Panc1 (cell line): ENCODE measurements at regions of chr7 and their contacts with region 1.

Region 1: DNA sequence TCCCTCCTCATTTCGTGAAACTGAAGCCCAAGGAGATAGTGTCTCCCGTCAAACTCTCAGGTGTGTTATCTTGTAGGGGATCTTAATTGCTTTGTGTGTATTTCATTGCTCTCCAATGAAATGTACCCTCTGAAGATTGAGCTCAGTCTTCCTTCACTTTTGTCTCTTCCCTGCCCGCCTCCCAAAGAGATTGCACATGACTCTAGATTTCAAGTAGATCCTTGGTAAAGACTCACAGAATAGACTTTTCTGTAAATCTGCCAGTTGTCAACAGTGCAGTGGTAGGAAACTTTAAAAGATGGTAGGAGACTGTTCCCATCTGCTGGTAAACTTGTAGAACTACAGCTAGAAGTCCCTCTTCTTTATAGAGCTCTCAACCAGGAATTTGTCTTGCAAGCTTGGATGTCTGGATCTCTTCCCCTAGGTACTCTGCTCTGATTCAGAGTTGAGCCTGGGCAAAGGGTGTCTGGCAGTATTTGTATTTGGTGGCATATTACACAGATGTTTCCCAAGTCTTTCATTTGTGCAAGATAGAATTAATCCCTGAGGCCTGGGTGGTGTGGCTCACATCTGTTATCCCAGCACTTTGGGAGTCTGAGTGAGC is 9.6 kb downstream of the CCL26 start:
- DNase-seq: peak; percentile 62
- ATAC-seq: peak; percentile 97
- H3K4me3 ChIP-seq: no peak overlapping the region
- H3K27ac ChIP-seq: no peak overlapping the region
- H3K4me1 ChIP-seq: no peaks in the 10 kb centered on the region
- H3K27me3 ChIP-seq: no peaks in the 10 kb centered on the region
- CTCF ChIP-seq: peak; percentile 83

Region 2: GRCh38 chr7:75642810-75643486 is 119.5 kb before region 1 on chr7:
- CTCF ChIA-PET with region 1: no interaction called
- POLR2A ChIA-PET with region 1: no interaction called
- in situ Hi-C with region 1: no loop called
- intact Hi-C with region 1: loop called (anchors 10 kb)
- DNase-seq: peak; percentile 67
- ATAC-seq: peak; percentile 68
- H3K4me3 ChIP-seq: no peak overlapping the region
- H3K27ac ChIP-seq: no peak overlapping the region
- H3K4me1 ChIP-seq: peaks cover 10% of the 10 kb centered on the region
- H3K27me3 ChIP-seq: no peaks in the 10 kb centered on the region
- CTCF ChIP-seq: peak; percentile 93

Region 3: GRCh38 chr7:75716992-75717626 is 45.3 kb before region 1 on chr7:
- CTCF ChIA-PET with region 1: no interaction called
- POLR2A ChIA-PET with region 1: no interaction called
- in situ Hi-C with region 1: no loop called
- intact Hi-C with region 1: no loop called
- DNase-seq: peak; percentile 83
- ATAC-seq: peak; percentile 58; the same call in 1 of the 2 replicates
- H3K4me3 ChIP-seq: no peak overlapping the region
- H3K27ac ChIP-seq: no peak overlapping the region
- H3K4me1 ChIP-seq: peaks cover 4% of the 10 kb centered on the region; the same call in 1 of the 2 replicates
- H3K27me3 ChIP-seq: no peaks in the 10 kb centered on the region
- CTCF ChIP-seq: no peak

Region 4: DNA sequence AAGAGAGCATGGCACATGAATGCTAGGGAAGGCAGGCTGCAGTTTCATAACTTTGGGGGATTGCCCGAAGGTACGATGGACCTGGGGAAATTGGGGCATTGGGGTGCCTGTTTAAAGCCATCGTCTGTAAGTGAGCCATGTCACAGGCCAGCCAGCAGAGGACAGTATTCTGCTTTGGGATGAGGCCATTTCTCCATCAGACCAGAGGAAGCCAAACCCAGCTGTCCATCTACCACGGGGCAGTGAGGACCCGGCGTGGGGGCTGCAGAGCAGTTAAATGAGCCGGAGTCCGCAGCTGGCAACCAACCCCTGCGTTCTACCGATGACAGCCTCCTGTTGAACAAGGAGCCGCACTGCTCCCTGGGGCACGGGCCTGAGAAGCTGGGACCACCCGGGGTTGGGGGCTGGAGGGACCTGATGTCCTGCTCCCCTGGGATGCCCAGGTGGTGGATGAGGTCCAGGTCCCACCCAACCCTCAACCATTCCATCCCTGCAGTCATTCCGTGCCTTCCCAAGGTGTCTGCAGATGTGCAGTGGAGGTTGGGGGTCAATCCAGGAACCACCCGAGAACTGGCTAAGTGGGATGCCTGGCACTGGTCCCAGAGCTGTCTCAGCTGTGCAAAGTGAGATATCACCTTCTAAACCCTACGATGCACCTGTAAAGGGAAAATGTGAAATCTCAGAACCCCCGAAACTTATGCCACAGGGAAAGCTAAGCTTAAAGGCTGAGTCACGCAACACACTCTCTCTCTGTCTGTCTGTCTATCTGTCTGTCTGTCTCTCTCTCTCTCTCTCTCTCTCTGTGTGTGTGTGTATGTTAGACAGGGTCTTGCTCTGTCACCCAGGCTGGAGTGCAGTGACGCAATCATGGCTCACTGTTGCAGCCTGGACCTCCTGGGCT is 104.3 kb after region 1 on chr7:
- CTCF ChIA-PET with region 1: no interaction called
- POLR2A ChIA-PET with region 1: no interaction called
- in situ Hi-C with region 1: no loop called
- intact Hi-C with region 1: no loop called
- DNase-seq: peak; percentile 75
- ATAC-seq: peak; percentile 93
- H3K4me3 ChIP-seq: peak overlapping the region in 1 of 2 experiments; percentile 8; a peak in 1 of 4 replicates
- H3K27ac ChIP-seq: no peak overlapping the region
- H3K4me1 ChIP-seq: 0 out of 2 replicates have a peak, but pooled peaks cover 3% of the 10 kb centered on the region
- H3K27me3 ChIP-seq: no peaks in the 10 kb centered on the region
- CTCF ChIP-seq: peak; percentile 98

Region 5: DNA sequence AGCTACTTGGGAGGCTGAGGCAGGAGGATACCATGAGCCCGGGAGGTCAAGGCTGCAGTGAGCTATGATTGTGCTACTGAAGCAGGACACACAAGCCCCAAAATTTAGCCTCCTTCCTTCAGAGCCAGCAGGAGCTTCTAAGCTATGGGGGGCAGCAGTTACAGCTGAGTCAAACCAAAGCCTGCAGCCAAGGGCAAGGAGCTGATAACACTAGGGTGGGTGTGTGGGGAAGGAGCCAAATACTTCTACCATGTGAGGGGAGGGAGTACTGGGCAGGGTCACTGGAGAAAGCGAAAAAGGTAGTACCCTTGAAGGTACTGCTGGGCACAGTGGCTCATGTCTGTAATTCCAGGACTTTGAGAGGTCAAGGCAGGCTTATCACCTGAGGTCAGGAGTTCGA is 114.5 kb after region 1 on chr7:
- CTCF ChIA-PET with region 1: no interaction called
- POLR2A ChIA-PET with region 1: no interaction called
- in situ Hi-C with region 1: no loop called
- intact Hi-C with region 1: no loop called
- DNase-seq: no peak
- ATAC-seq: no peak
- H3K4me3 ChIP-seq: no peak overlapping the region
- H3K27ac ChIP-seq: no peak overlapping the region
- H3K4me1 ChIP-seq: peaks cover 12% of the 10 kb centered on the region; the same call in 1 of the 2 replicates
- H3K27me3 ChIP-seq: no peaks in the 10 kb centered on the region
- CTCF ChIP-seq: no peak